Heart left ventricle (tissue), 16 donors: ENCODE measurements at regions of chr11 and their contacts with region 1.

Region 1: DNA sequence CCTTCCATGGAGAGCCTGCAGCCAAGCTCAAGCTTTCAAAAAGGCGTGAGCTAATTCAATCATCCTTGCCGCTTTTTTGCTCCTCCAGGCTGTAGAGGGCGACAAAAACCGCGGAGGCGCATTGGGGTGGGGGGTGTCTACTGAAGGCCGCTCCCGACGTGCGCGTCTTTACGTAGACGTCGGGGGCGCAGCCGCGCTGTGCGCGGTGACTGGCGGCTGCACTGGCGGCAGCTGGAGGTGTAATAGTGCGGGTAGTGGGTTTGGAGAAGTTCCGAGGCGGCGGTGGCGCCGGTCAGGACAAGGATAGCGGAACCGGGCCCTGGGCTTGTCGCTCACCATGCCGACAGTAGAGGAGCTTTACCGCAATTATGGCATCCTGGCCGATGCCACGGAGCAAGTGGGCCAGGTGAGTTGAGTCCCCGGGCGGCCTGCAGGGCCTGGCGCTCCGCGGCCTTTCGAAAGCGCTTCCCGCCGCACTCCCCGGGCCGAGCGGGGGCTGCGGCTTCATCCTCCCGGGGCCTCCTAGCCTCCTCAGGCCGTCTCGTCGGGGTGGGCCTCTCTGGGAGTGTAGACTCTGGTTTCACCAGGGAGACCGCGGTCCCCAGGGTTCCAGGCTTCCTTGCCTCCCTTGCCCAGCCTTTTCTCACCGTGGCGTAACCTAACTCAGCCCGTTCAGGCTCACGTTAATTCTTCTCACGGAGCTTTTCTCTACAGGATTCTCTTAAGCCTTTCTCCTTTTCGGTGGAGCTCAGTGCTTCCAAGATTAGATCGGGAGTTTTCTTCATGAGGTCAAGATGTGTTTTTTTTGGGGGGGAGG is at the start of gene API5:
- DNase-seq: peak; percentile 90 to 94 (median 93)
- ATAC-seq: peak; percentile 99 to 100 (median 100)
- H3K4me3 ChIP-seq: peak within 1 kb of the TSS; percentile 63 to 97 (median 89)
- H3K27ac ChIP-seq: peak within 1 kb of the TSS in 11 of 12 donors; percentile 55 to 89 (median 78)
- H3K4me1 ChIP-seq: peaks cover 0 to 38% (median 20%) of the 10 kb centered on the region in 12 donors
- H3K27me3 ChIP-seq: no peaks in the 10 kb centered on the region
- CTCF ChIP-seq: peak; percentile 59 to 88 (median 74)
- POLR2A ChIP-seq: peak in 1 of 2 donors; percentile 74
- total RNA-seq, gene API5: 37.2 to 57.9 (median 43.5) TPM

Region 2: GRCh38 chr11:43358801-43359421 is 46.9 kb after region 1 on chr11 and contains the start of gene TTC17:
- intact Hi-C with region 1: loop called in 1 of 10 experiments (anchors 5 kb)
- DNase-seq: peak; percentile 95 to 98 (median 97)
- ATAC-seq: peak; percentile 99
- H3K4me3 ChIP-seq: peak within 1 kb of the TSS; percentile 60 to 97 (median 88)
- H3K27ac ChIP-seq: peak within 1 kb of the TSS; percentile 82 to 95 (median 90)
- H3K4me1 ChIP-seq: peaks cover 2 to 47% (median 20%) of the 10 kb centered on the region in 12 donors
- H3K27me3 ChIP-seq: no peaks in the 10 kb centered on the region
- CTCF ChIP-seq: peak in 1 of 12 donors; percentile 5
- POLR2A ChIP-seq: peak in 1 of 2 donors; percentile 79
- total RNA-seq, gene TTC17: 20.9 to 43.9 (median 31.8) TPM